GM10248 (cell line): ENCODE measurements at regions of chr1 and their contacts with region 1.

Region 1: DNA sequence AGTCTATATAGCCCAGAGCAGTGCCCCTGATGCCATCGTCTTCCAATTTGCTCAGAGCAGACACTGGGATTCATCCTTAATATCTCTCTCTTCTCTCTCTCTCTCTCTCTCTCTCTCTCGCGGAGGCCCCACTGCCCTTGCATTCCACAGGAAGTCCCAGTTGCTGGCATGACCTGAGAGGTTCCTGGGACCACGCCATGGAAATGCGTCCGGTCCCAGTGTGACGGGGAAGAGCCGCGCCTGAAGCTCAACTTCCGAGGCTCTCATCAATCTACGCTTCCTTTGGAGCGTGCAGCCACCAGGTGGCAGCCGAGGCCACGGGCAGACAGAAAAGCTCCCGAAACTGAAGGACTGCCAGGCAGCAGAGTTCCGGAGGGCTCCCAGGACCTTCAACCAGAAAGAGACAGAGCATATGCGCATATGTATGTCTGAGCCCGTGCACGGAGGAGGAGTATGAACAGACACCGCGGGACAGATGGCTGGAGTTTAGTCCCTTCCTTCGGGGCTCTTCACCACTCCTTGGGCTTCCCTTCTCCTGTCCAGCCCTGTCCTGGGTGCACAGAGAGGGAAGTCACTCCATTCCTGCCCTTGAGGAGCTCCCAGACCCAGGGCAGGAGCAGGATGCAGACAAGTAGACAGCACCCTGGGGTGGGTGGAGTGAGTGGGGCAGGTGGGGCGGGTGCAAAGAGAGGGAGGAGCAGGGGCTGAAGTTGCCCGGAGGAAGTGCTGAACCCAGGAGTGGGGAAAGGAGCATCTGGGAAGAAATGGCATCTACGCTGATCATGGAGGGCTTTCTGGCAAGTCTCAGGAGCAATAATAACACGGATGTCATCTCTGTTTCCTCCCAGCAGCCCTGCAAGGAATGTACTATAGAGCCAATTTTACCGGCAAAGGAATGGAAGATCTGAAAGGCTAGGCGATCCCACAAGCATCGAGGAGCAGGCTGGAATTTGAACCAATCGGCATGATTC is 10.5 kb downstream of the PDZK1IP1 start:
- DNase-seq: peak; percentile 87
- CTCF ChIP-seq: peak; percentile 97

Region 2: DNA sequence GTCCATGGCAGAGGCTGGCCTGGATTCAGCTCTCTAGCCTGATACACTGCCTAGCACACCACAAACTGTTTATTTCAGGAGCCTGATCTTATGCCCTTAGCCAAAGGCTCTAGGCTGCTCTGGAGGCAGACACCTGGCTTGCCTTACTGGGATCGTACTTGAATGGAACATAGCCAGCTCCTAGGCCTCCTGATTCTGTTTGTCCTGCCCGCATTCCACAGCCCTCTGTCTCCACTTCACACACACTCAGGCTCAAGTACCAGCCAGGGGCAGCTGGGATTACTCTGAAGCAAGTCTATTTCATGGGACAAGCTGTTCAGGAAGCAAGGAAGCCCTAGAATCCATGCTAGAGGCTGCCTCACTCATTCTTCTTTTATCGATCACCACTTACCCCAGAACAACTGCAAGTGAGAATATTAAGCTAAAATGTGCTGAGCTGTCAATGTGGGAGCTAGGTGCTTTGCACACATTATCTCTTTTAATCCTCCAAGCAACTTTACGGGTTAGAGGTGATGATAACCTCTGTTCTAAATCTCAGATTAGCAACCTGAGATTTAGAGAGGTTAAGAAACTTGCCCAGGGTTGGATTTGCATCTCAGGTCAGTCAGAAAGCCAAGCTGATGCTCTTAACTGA is 411.5 kb before region 1 on chr1:
- CTCF ChIA-PET with region 1: no interaction called
- POLR2A ChIA-PET with region 1: no interaction called
- DNase-seq: no peak
- CTCF ChIP-seq: no peak

Region 3: DNA sequence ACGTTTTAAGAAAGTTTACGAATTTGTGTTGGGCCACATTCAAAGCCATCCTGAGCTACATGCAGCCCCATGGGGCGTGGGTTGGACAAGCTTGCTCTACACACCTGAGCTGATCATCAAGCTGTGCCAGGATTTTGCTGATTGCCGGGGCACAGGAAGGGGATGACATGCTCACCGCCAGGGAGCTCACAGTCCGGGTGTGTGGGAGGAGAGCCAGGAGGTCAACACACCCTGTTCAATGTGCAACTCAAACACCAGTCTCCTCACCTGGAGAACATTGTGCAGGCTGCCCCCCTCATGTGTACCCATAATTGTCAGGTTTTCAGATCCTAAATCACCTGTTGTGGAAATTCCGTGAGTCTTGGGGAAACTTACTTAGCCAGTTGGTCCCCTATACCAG is 239.0 kb before region 1 on chr1:
- CTCF ChIA-PET with region 1: no interaction called
- POLR2A ChIA-PET with region 1: no interaction called
- DNase-seq: no peak
- CTCF ChIP-seq: no peak

Region 4: GRCh38 chr1:47161298-47162040 is 17.8 kb before region 1 on chr1:
- CTCF ChIA-PET with region 1: interaction called, 19 read pairs
- POLR2A ChIA-PET with region 1: no interaction called
- DNase-seq: no peak
- CTCF ChIP-seq: no peak

Region 5: DNA sequence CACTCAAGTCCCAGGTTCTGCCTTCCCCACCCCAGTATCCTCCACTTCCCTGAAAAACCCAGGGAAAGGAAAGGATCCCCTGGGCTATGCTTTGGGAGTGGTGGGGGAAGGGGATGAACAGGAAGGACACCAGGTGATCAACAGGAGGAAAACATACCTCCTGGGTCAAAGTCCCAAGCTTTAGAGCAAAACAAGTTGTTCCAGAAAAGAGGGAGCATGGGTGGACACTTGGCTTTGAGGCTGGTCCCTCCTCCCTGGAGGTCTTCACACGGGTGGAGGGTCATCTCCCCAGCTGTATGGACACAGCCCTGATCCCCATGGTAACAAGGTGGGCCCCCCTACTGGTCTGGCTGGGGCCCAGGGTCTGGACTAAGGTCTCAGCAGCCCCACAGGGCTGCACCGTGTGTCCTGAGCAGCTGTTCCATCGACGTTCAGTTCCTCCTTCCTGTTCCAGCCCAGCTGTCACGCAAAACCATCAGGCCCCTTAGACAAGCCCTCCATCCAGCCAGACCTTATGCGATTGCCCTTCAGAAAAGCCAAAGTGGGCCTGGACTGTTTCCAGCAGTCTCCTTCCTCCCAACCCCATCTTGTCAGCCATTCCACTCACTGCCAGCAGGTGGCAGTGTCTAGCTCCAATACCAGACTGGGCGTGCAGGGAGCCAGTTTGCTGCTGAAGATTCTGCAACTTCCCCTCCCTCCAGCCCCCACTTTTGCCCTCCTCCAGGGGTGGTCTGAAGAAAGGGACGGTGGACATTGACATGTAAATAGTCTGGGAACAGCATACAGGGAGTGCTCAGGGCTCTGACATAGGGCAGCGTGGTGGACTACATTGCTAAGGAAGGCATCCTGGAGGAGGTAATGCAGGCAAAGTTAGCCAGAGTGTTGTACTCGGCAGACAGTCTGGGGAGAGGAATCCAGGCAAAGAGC is 13.4 kb after region 1 on chr1:
- CTCF ChIA-PET with region 1: interaction called, 192 read pairs
- POLR2A ChIA-PET with region 1: no interaction called
- DNase-seq: peak; percentile 79
- CTCF ChIP-seq: peak; percentile 98

Region 6: DNA sequence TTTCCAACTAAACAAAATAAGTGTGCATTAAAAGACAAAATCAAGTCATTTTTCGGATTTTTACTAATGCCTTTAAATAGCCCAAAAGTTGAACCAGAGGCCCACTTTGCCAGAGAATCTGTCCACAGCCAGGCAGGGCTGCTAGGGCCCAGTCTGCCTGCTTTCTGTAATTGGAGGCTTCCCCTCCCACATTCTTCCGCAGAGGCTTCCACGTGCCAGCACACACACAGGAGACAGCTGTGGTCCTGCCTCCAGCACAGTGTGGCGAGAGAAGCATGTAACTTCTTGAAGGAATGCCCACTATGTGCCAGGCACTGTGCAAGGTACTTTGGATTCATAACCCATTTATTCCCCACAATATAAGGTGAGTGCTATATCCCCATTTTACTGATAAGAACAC is 21.9 kb after region 1 on chr1:
- CTCF ChIA-PET with region 1: interaction called, 22 read pairs
- POLR2A ChIA-PET with region 1: no interaction called
- DNase-seq: no peak
- CTCF ChIP-seq: no peak

Region 7: DNA sequence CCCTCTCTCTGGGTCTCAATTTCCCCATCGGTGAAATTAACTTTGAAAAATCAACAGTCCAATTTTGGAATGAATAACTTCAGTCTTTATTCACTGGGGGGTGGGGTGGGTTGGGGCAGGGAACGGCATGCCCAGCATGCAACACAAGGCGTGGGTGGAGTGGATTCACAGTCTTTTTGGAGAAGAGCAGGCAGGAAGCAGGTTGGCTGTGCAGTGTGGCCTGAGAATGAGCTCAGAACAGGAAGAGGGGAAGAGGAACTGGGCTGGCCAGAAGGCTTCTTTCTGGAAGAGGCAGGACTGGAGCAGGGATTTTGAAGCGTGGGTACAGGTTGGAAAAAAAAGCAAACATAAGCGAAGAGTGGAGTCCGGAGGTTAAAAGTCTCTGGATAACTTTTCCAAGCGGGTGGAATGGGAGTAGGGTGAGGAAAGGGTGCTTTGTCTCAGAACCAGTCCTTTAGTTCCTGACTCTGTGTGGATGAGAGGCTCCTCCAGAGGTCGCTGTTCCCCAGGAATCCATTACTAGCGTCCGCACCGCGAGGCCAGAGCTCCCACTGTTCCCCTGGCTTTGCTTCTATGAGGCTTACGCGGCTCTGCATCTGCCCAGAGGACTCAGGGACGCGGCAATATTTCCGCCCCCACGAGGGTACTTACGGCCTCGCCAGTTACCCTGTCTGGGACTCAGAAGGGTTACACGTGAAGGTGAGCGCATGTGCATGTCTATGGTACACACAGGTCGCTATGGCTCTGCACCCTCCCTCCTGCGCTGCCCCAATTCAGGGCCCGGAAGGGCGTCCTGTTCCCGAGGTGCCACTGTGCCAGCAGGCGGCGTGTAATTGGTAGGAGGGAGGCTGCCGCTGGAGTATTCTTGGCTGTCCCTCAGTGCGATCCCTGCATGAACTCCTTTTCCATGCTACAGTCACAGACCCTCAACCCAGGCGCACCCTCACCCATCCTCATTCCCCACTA is 253.1 kb after region 1 on chr1:
- CTCF ChIA-PET with region 1: interaction called, 16 read pairs
- POLR2A ChIA-PET with region 1: no interaction called
- DNase-seq: peak; percentile 66
- CTCF ChIP-seq: peak; percentile 65

Region 8: DNA sequence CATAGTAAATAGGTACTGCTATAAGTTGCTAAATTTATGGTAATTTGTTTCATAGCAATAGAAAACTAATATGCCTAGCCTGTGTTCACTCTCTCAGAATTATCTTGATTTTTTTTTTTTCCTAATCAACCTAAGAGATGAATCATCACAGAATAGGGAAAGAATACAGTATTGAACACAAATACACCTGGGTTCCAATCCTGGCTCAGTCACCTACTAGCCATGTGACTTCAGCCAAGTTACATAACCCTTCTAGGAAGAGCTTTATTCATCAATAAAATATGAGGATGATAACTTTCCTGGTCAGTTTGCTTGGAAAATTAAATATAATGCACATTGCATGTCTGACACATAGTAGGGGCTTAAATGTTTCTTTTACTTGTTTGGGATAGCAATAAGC is 538.0 kb after region 1 on chr1:
- CTCF ChIA-PET with region 1: interaction called, 13 read pairs
- POLR2A ChIA-PET with region 1: no interaction called
- DNase-seq: no peak
- CTCF ChIP-seq: no peak